Posterior vena cava (tissue), 2 donors: ENCODE measurements at regions of chr17 and their contacts with region 1.

Region 1: GRCh38 chr17:57567251-57567650 is 177.8 kb downstream of the CCDC182 start:
- DNase-seq: no peak

Region 2: GRCh38 chr17:57823469-57824401 is 256.5 kb after region 1 on chr17:
- intact Hi-C with region 1: loop called in 1 of 2 experiments (anchors 10 kb)
- DNase-seq: no peak